K562 (cell line): ENCODE measurements at regions of chr1 and their contacts with region 1.

Region 1: DNA sequence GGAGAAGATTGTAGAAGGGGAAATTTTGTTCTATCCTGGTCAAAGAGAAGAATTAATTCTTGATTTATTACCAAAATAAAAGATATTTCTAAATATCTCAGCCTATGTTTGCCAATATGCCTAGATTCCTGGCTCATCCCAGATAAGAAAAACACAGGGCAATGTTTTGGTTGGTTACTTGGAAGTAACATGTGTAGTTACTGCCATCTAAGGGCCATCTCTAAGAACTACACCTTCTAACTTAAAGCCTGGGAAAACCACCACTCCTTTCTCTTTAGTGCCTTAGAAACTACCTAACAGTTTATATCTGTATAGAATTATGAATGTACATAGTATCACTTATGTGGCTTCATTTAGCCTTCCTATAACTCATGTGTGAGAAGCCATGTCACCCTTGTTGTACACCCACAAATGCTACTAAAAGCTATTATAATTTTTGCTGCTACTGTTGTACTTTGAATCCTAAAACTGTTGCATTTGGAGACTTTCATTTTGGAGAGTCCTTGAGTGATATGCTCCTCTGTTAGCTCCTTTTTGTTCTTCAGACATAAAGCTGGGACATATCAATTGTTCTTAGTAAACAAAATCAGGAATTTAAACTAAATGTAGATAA is 4.5 kb downstream of the AIM2 start:
- DNase-seq: peak; percentile 60 to 68 (median 62)
- ATAC-seq: peak; percentile 73
- H3K4me3 ChIP-seq: no peak overlapping the region
- H3K27ac ChIP-seq: no peak overlapping the region
- H3K4me1 ChIP-seq: peaks cover 0 to 9% of the 10 kb centered on the region in 2 experiments; a peak in 3 of 5 replicates
- H3K27me3 ChIP-seq: no peaks in the 10 kb centered on the region; a peak in 1 of 5 replicates
- CTCF ChIP-seq: peak; percentile 48 to 79 (median 66); a peak in 5 of 6 replicates
- EP300 ChIP-seq: no peak
- POLR2A ChIP-seq: no peak
- RAD21 ChIP-seq: peak; percentile 87 to 89

Region 2: DNA sequence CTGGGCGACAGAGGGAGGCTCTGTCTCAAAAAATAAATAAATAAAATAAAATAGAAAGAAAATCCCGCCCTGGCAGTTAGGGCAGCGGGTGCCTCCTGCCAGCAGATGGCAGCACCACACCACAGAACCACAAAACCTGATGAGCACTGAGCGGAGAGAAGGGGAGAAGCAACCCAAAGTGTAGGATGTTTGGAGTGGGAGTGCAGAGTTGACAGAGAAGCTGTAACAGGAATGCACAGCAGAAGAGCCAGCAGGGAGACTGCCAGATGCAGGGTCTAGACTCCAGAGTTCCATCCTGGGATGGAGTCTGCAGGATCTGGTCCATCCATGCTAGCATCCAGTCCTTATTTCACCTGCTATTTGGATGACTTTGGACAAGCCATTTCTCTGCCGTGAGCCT is 1108.4 kb before region 1 on chr1:
- CTCF ChIA-PET with region 1: no interaction called
- POLR2A ChIA-PET with region 1: no interaction called
- in situ Hi-C with region 1: no loop called
- intact Hi-C with region 1: loop called (anchors 10 kb)
- DNase-seq: peak; percentile 64 to 73 (median 68)
- ATAC-seq: peak; percentile 95
- H3K4me3 ChIP-seq: no peak overlapping the region
- H3K27ac ChIP-seq: no peak overlapping the region
- H3K4me1 ChIP-seq: no peaks in the 10 kb centered on the region
- H3K27me3 ChIP-seq: peaks cover 0 to 13% of the 10 kb centered on the region in 2 experiments; a peak in 1 of 5 replicates
- CTCF ChIP-seq: peak; percentile 76 to 89 (median 81)
- EP300 ChIP-seq: no peak
- POLR2A ChIP-seq: no peak
- RAD21 ChIP-seq: peak; percentile 84 to 86

Region 3: GRCh38 chr1:158506369-158506987 is 565.6 kb before region 1 on chr1:
- CTCF ChIA-PET with region 1: interaction called, 4 read pairs
- POLR2A ChIA-PET with region 1: no interaction called
- in situ Hi-C with region 1: no loop called
- intact Hi-C with region 1: loop called (anchors 2 kb)
- DNase-seq: peak; percentile 10 to 61 (median 20)
- ATAC-seq: peak; percentile 93
- H3K4me3 ChIP-seq: no peak overlapping the region
- H3K27ac ChIP-seq: no peak overlapping the region
- H3K4me1 ChIP-seq: no peaks in the 10 kb centered on the region
- H3K27me3 ChIP-seq: no peaks in the 10 kb centered on the region
- CTCF ChIP-seq: peak; percentile 63 to 70 (median 65)
- EP300 ChIP-seq: no peak
- POLR2A ChIP-seq: no peak
- RAD21 ChIP-seq: peak; percentile 62 to 70

Region 4: GRCh38 chr1:158819461-158820443 is 252.3 kb before region 1 on chr1:
- CTCF ChIA-PET with region 1: no interaction called
- POLR2A ChIA-PET with region 1: no interaction called
- in situ Hi-C with region 1: no loop called
- intact Hi-C with region 1: loop called (anchors 10 kb)
- DNase-seq: peak; percentile 25 to 79 (median 50)
- ATAC-seq: peak; percentile 92
- H3K4me3 ChIP-seq: no peak overlapping the region
- H3K27ac ChIP-seq: peak overlapping the region; percentile 88
- H3K4me1 ChIP-seq: peaks cover 0 to 33% of the 10 kb centered on the region in 2 experiments; a peak in 3 of 5 replicates
- H3K27me3 ChIP-seq: no peaks in the 10 kb centered on the region
- CTCF ChIP-seq: no peak
- EP300 ChIP-seq: peak; percentile 97
- POLR2A ChIP-seq: no peak
- RAD21 ChIP-seq: peak in 1 of 2 experiments; percentile 28; a peak in 1 of 4 replicates